WTC11 (cell line): ENCODE measurements at regions of chr1 and their contacts with region 1.

Region 1: DNA sequence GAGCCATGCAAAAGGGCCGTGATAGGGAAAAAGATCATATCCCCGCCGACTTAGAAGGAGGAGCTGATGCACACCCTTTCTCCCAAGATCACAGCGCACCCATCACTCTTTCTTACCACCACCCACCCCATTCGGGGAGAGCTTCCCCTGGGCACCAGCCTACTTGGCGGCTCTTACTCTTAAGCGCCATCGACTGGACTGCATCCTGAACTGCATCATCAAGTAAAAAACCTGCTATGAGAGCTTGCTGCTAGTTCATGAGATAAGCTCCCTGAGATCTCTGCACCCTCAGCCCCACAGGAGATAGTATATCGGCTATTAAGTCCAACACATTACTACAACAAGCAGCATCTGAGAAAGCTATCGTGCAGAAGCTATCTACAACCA is 125.1 kb downstream of the BARHL2 start:
- DNase-seq: peak; percentile 61
- ATAC-seq: peak; percentile 97
- H3K4me3 Mint-ChIP-seq: no peak overlapping the region
- H3K27ac Mint-ChIP-seq: no peak overlapping the region
- H3K4me1 Mint-ChIP-seq: no peaks in the 10 kb centered on the region
- H3K27me3 Mint-ChIP-seq: no peaks in the 10 kb centered on the region
- CTCF ChIP-seq: peak; percentile 54

Region 2: DNA sequence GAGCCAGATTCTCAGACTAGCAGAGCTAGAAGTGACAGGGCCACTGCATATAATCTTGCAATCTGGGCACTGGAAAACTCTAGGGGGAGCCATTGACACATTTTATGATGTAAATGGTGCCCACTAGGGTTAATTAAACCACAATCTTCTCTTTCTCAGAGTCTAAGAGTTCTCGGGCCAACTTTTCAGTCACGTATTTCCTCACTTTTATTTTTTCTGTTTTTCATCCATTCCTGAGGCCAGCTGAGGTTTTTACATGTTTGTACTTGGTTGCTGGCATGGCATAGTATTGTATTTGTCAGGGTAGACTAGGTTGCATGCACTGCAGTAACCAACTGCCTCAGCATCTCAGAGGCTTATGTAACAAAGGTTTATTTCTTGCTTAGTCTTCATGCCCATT is 458.8 kb before region 1 on chr1:
- CTCF ChIA-PET with region 1: interaction called, 13 read pairs
- POLR2A ChIA-PET with region 1: no interaction called
- DNase-seq: peak; percentile 28
- ATAC-seq: peak; percentile 80
- H3K4me3 Mint-ChIP-seq: no peak overlapping the region
- H3K27ac Mint-ChIP-seq: no peak overlapping the region
- H3K4me1 Mint-ChIP-seq: peaks cover 10% of the 10 kb centered on the region
- H3K27me3 Mint-ChIP-seq: no peaks in the 10 kb centered on the region
- CTCF ChIP-seq: no peak

Region 3: DNA sequence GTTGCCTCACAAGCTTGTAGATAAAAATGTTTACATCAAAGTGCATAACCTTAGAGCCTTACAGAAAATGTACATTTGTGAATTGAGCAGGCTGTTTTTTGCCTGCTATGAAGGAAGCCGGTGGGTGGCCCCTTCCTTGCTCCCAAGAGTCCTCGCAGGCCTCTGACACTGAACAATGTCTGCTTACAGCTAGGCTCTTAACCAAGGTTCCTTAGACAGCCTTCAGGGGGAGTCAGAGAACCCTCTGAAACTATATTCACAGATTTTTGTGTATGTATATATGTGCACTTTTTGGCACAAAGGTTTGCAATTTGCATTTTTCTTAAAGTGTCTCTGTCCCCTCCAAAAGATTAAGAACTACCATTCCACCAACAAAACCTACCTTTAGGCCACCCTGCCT is 157.5 kb before region 1 on chr1:
- CTCF ChIA-PET with region 1: interaction called, 20 read pairs
- POLR2A ChIA-PET with region 1: no interaction called
- DNase-seq: peak; percentile 18
- ATAC-seq: peak; percentile 93
- H3K4me3 Mint-ChIP-seq: no peak overlapping the region
- H3K27ac Mint-ChIP-seq: no peak overlapping the region
- H3K4me1 Mint-ChIP-seq: no peaks in the 10 kb centered on the region
- H3K27me3 Mint-ChIP-seq: no peaks in the 10 kb centered on the region
- CTCF ChIP-seq: no peak

Region 4: GRCh38 chr1:90475631-90476030 is 116.3 kb before region 1 on chr1:
- CTCF ChIA-PET with region 1: interaction called, 18 read pairs
- POLR2A ChIA-PET with region 1: no interaction called
- DNase-seq: no peak
- ATAC-seq: no peak; the same call in 1 of the 2 replicates
- H3K4me3 Mint-ChIP-seq: no peak overlapping the region
- H3K27ac Mint-ChIP-seq: no peak overlapping the region
- H3K4me1 Mint-ChIP-seq: no peaks in the 10 kb centered on the region
- H3K27me3 Mint-ChIP-seq: no peaks in the 10 kb centered on the region
- CTCF ChIP-seq: no peak

Region 5: DNA sequence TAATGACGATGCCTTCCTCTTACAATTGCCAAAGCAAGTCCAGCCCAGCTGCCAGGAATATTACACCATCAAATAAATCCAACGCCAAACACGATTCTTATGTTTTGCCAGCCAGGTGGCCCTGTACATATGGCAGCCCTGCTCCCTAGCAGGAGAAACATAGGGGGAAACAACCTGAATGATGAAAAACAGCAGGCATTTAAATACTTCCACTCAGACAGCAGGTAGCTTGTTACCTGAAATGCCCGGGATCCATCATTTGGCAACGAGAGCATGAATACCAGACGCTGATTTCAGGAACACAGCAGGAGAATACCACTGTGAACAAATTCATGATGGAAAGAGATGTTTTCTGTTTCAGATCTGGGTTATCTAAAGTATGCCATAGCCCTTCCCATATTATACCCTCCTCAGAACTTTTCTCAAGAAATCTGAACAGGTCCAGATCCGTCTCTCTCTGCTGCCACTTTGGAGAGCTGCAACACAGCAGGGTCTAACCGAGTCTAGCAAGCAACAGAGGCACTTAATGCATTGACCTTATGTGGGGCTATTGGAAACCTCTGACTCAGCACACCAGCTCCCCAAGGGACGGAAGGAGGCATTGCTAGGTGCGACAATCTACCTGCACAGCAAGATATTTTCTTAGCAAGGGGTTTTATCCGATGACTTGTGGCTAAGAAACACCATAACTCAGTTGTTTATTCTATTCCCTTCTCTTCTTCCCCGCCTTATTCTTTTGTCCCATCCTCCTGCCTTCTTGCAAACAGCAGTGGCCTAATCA is 41.1 kb before region 1 on chr1:
- CTCF ChIA-PET with region 1: interaction called, 12 read pairs
- POLR2A ChIA-PET with region 1: no interaction called
- DNase-seq: peak; percentile 41
- ATAC-seq: peak; percentile 100
- H3K4me3 Mint-ChIP-seq: no peak overlapping the region
- H3K27ac Mint-ChIP-seq: no peak overlapping the region
- H3K4me1 Mint-ChIP-seq: peaks cover 16% of the 10 kb centered on the region
- H3K27me3 Mint-ChIP-seq: peaks cover 20% of the 10 kb centered on the region
- CTCF ChIP-seq: no peak

Region 6: GRCh38 chr1:90579212-90579802 is 12.7 kb before region 1 on chr1:
- CTCF ChIA-PET with region 1: interaction called, 58 read pairs
- POLR2A ChIA-PET with region 1: no interaction called
- DNase-seq: no peak
- ATAC-seq: peak; percentile 78
- H3K4me3 Mint-ChIP-seq: no peak overlapping the region
- H3K27ac Mint-ChIP-seq: no peak overlapping the region
- H3K4me1 Mint-ChIP-seq: no peaks in the 10 kb centered on the region
- H3K27me3 Mint-ChIP-seq: peaks cover 4% of the 10 kb centered on the region
- CTCF ChIP-seq: peak; percentile 38

Region 7: DNA sequence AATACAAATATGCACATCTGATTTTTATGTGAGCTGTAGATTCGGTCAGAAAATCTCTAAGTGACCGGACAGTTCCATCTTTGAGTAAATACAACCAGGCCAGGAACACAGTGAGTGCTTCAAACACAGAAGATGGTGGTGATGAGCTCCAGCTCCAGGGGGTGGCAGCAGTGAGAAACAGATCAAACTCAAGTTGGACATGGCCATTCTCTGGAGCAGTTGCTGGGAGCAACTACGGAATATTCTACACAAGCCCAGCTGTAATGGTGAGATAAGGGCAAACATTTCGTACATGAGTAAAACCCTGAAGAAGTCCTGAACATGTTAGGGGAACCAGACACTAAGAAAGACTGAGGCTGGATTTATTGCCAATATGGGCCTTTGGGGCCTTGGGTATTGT is 24.4 kb after region 1 on chr1:
- CTCF ChIA-PET with region 1: interaction called, 25 read pairs
- POLR2A ChIA-PET with region 1: no interaction called
- DNase-seq: peak; percentile 66
- ATAC-seq: peak; percentile 91
- H3K4me3 Mint-ChIP-seq: no peak overlapping the region
- H3K27ac Mint-ChIP-seq: no peak overlapping the region
- H3K4me1 Mint-ChIP-seq: peaks cover 23% of the 10 kb centered on the region
- H3K27me3 Mint-ChIP-seq: no peaks in the 10 kb centered on the region
- CTCF ChIP-seq: 0 out of 2 replicates have a peak, but pooled peaks have one; percentile 17